ENCODE measurements at regions of chr1 and their contacts with region 1.

Region 1: DNA sequence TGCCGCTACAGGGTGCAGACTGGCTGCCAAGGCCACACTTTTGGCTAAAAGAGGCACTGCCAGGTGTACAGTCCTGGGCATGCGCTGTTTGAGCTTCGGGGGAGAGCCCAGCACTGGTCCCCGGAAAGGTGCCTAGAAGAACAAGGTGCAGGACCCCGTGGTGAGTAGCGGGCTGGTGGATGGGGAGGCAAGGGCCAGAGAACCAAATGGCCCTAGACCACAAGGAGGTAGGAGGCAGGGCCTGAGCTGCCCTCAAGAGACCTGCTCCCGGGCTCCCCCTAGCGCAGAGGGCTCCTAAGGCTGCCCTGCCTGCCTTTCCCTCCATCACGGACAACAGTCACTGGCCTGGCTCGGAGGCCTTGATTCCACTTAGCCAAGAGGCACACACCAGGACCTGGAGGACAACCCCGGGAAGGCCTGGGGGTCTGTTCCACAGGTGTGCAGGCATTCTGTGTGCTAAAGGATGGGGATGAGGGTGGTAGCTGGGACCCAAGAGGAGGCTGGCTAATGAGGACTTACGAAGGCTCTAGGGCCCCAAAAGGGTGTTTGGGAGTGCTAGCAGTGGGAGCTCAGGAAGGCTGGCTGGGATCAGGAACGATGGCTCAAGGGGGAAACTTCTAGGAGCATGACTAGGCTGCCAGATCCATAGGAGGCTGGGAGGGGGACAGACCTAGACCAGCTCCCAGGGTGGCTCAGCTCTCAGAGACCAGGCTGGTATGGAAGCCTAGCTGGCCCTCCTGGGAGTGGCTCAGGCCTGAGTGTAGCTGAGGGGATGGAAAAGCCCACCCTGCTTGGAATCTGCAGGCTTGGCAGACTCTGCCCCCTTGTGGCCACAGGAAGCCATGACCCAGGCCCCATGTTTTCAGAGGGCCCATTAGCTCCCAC is 742 bp downstream of the ARTN start:
- DNase-seq: peak; percentile 65
- H3K4me3 Mint-ChIP-seq: no peak overlapping the region
- H3K27ac Mint-ChIP-seq: no peak overlapping the region
- H3K4me1 Mint-ChIP-seq: peaks cover 11% of the 10 kb centered on the region
- H3K27me3 Mint-ChIP-seq: peaks cover 11% of the 10 kb centered on the region

Region 2: GRCh38 chr1:43529206-43529731 is 405.1 kb before region 1 on chr1:
- CTCF ChIA-PET with region 1: interaction called, 20 read pairs
- POLR2A ChIA-PET with region 1: no interaction called
- DNase-seq: peak; percentile 81
- H3K4me3 Mint-ChIP-seq: no peak overlapping the region
- H3K27ac Mint-ChIP-seq: no peak overlapping the region
- H3K4me1 Mint-ChIP-seq: peaks cover 20% of the 10 kb centered on the region
- H3K27me3 Mint-ChIP-seq: peaks cover 54% of the 10 kb centered on the region

Region 3: GRCh38 chr1:43750083-43750482 is 184.3 kb before region 1 on chr1:
- CTCF ChIA-PET with region 1: interaction called, 17 read pairs
- POLR2A ChIA-PET with region 1: no interaction called
- DNase-seq: no peak
- H3K4me3 Mint-ChIP-seq: no peak overlapping the region
- H3K27ac Mint-ChIP-seq: no peak overlapping the region
- H3K4me1 Mint-ChIP-seq: no peaks in the 10 kb centered on the region
- H3K27me3 Mint-ChIP-seq: no peaks in the 10 kb centered on the region

Region 4: DNA sequence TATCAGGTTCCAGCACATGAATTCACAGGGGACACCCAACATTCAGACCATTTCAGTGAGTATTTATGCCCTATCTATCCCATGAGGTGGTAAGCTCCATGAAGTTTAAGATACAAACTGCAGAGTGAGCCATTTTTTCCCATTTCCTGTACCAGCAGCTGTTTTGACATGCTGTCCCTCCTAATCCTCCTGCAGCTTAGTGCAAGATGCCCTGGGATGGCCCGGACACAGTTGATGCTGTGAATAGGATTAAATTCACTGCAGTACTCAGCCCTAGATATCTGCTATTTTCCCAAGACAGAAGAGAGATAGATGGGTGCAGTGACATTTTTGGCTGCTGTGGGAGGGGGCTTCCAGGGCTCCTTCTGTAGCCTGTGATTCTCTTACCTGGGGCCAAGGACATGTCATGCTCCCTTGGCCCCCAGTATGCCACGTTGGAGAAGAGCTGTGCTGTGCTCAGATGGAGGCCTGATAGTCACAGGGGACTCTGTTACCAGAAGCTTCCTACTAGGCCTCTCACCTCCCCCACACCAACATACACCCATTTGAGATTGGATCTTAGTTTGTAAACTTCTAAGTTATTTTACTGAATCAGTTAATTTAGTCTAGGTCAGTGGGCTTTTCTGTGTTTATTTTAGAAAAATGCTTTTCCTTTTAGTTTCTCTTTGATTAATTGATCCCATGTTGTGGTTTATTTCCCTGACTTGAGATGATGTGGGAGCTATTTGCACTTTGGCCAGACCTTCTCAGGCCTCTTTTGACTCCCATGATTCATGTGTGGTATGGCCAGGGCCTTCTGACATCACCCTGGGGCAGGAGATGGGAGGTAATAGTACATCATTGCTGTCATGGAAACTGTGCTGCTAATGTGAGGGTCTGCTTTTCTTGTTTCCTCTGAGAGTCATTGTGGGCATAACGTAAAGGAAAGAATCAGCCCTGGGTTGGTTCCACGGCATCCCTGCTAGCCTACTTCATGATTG is 134.4 kb before region 1 on chr1:
- CTCF ChIA-PET with region 1: no interaction called
- POLR2A ChIA-PET with region 1: no interaction called
- DNase-seq: no peak
- H3K4me3 Mint-ChIP-seq: no peak overlapping the region
- H3K27ac Mint-ChIP-seq: no peak overlapping the region
- H3K4me1 Mint-ChIP-seq: peaks cover 9% of the 10 kb centered on the region
- H3K27me3 Mint-ChIP-seq: no peaks in the 10 kb centered on the region

Region 5: GRCh38 chr1:43893006-43893405 is 41.3 kb before region 1 on chr1:
- CTCF ChIA-PET with region 1: no interaction called
- POLR2A ChIA-PET with region 1: no interaction called
- DNase-seq: no peak
- H3K4me3 Mint-ChIP-seq: no peak overlapping the region
- H3K27ac Mint-ChIP-seq: no peak overlapping the region
- H3K4me1 Mint-ChIP-seq: no peaks in the 10 kb centered on the region
- H3K27me3 Mint-ChIP-seq: no peaks in the 10 kb centered on the region

Region 6: DNA sequence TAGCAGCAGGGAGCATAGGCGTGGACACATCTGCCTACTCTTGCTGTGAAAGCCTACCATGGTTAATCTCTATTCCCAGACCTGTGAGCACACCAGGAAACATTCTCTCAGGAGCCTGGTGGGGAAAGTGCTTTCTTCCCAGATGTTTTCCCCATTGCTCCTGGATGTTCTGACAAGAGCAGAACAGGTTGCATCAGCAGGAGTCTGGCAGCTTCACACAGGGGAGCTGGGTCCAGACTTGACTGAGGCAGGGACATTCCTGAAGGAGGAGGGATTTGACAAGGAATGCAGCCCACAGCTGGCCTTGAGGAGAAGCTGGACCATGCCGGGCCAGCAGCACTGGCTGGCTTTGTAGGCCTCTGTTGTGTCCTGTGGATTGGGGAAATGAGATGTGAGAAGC is 21.7 kb before region 1 on chr1:
- CTCF ChIA-PET with region 1: interaction called, 21 read pairs
- POLR2A ChIA-PET with region 1: no interaction called
- DNase-seq: no peak
- H3K4me3 Mint-ChIP-seq: no peak overlapping the region
- H3K27ac Mint-ChIP-seq: no peak overlapping the region
- H3K4me1 Mint-ChIP-seq: no peaks in the 10 kb centered on the region
- H3K27me3 Mint-ChIP-seq: no peaks in the 10 kb centered on the region

Region 7: GRCh38 chr1:43991476-43992231 is 57.3 kb after region 1 on chr1 and contains the start of gene CCDC24:
- CTCF ChIA-PET with region 1: interaction called, 12 read pairs
- POLR2A ChIA-PET with region 1: no interaction called
- DNase-seq: peak; percentile 78
- H3K4me3 Mint-ChIP-seq: peak within 1 kb of the TSS; percentile 90
- H3K27ac Mint-ChIP-seq: peak within 1 kb of the TSS; percentile 64
- H3K4me1 Mint-ChIP-seq: peaks cover 24% of the 10 kb centered on the region
- H3K27me3 Mint-ChIP-seq: no peaks in the 10 kb centered on the region
- total RNA-seq, gene CCDC24: 1.8 to 2.2 TPM

Measured in activated CD4-positive, alpha-beta memory T cell treated with anti-CD3 and anti-CD28 coated beads, Interleukin-2, amount 10 ng/mL, durations not matched to agents 7 days and 5 days (primary cell).